Right ventricle myocardium inferior (tissue), 1 donor: ENCODE measurements at regions of chr14 and their contacts with region 1.

Region 1: GRCh38 chr14:23567192-23568020 is at the start of gene AP1G2:
- DNase-seq: peak; percentile 95
- ATAC-seq: peak; percentile 76
- total RNA-seq, gene AP1G2: 15.5 TPM

Region 2: GRCh38 chr14:23478111-23478759 is 89.2 kb before region 1 on chr14:
- intact Hi-C with region 1: loop called (anchors 2 kb)
- DNase-seq: no peak
- ATAC-seq: no peak

Region 3: DNA sequence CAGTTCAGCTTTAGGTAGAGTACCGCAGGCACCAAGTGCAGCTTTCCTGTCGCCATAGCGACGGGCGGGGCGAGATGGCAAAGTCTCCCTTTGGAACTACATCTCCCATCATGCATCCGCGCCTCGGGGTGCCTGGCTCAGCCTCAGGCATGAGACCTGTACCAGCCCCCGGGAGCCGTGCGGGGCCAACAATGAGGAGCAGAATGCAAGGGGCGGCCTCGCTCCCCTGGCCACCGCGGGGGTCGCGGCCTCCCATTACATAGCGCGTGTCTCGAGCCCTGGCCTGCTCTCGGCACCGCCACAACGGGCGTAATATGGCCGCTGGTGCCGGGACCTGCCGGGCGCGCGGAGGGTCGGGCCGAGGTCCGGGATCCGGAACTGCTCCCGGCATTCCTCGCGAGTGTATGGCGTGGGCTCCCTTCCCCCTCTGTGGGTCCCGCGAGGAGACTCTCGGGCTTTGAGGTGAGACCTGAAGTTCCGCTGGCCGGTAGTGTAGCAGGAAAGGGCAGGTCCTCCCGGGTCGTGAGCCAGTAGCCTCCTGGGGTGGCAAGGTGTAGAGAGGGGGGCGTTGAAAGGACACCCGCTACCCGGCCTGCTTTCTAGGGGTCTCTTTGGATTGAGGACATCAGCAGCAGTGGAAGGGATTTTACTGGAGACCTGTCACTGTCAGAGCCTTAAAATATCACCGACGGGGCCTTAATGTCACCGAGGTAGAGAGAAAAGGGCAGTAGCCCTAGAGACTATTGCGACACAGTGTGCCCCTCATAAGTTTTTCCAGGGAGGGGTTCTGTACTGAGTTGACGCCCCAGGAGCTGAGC is 11.3 kb before region 1 on chr14 and contains the start of gene THTPA:
- intact Hi-C with region 1: no loop called
- DNase-seq: peak; percentile 98
- ATAC-seq: peak; percentile 96
- total RNA-seq, gene THTPA: 16.0 TPM

Region 4: DNA sequence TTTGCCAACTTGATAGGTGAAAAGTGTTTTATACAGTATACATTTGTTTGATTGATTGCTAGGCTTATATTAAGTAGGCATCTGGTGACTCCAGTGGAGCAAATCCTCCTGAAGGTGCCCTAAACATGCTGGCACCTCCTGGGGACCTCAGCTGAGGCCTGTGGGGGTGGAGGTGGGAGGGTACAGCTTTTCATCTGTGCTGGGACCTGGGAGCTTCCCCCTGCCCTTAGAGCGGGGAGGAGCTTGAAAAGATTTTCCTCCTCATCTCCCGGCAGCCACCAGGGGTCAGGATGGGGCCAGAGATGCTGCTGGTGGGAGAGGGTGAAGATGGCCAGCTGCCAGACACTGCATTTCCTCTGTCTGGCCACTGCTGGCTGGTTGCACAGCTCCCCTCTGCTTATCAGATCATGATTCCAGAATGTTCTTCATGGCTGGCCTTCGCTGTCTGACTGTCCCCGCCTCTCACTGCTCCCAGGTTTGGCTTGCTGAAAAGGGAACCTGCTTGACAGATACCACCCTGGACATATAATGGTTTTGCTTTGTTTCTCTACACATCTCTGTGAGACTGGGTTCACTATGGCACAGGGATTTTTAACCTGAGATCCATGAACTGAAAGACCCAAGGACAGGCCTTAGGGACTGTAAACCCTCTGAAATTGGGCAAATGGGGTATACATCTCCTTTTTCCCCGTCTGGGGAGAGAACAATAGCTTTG is 21.6 kb after region 1 on chr14:
- intact Hi-C with region 1: no loop called
- DNase-seq: peak; percentile 91
- ATAC-seq: peak; percentile 83